Dorsolateral prefrontal cortex (tissue), 120 donors: ENCODE measurements at regions of chr3 and their contacts with region 1.

Region 1: DNA sequence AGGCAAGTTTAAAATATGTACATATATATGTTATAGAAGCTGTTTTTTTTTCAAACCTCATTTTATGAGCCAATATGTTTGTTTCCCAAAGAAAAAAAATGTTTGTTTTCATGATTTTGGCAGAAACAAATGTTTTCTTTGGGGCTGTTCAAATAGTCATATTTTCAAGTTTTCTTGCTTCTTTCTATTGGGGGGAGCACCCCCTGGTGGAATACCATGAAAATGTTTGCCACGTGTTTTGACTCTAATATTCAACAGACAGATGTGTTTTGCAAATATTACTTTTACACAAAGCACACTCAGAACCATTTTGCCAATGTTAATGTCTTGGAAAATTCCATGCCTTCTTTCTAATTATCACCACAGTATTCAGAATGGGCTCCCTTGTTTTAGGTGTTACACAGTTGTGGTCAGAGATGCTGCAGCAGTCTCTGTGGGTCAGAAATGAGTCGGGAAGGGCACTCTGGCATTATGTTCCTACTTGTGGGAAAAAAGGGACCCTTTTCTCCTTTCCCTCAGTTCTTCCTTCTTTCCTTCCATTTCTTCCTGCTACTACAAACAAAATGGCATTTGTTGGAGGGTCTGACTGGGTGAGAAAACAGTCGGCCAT is 817.0 kb downstream of the TUSC7 start:
- DNase-seq: peak in 2 of 10 donors; percentile 49 to 75
- H3K4me3 ChIP-seq: no peak overlapping the region
- H3K27ac ChIP-seq: peak overlapping the region in 20 of 59 donors; percentile 2 to 59 (median 28)
- H3K27me3 ChIP-seq: no peaks in the 10 kb centered on the region
- CTCF ChIP-seq: peak; percentile 58 to 91 (median 79)

Region 2: DNA sequence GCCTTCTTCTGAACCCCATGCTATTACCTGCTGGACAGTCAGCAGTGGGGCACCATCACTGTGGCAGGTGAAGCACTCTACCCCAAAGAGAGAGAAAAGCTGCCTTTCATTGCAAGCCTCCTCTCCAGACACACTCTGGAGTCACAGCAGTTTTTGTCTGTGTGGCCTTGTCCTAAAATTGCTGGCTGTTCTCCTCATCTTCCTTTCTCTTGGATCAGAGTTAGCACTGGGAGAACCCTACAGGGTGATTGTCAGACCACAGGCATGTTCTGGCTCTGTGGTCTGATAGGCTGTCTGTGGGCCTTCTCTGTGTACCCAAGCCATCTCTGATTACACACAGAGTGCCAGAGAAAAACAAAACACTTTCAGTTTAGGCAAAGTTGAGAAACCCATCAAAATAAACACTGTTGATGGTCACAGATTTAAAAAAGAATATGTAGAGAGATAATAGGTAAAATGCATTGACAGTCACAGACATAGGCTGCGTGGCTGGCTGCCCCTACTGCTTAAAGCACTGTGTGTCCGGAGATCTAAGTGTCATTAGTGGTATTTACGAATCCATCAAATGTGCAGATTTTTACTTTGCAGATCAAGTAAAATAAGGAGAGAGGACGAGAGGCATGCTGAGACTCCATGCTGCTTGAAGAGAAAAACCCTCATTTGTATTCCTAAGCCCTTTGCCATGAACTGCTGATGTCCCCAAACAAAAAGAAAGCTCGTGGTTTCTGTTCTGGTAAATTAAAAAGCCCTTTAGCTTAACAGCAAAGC is 127.1 kb before region 1 on chr3:
- intact Hi-C with region 1: loop called (anchors 5 kb)
- DNase-seq: peak in 1 of 10 donors; percentile 12
- H3K4me3 ChIP-seq: peak overlapping the region in 53 of 59 donors; percentile 8 to 60 (median 33)
- H3K27ac ChIP-seq: peak overlapping the region; percentile 23 to 93 (median 87)
- H3K27me3 ChIP-seq: no peaks in the 10 kb centered on the region
- CTCF ChIP-seq: peak in 2 of 56 donors; percentile 9 to 14